CD8-positive, alpha-beta memory T cell (primary cell): ENCODE measurements at regions of chr3 and their contacts with region 1.

Region 1: DNA sequence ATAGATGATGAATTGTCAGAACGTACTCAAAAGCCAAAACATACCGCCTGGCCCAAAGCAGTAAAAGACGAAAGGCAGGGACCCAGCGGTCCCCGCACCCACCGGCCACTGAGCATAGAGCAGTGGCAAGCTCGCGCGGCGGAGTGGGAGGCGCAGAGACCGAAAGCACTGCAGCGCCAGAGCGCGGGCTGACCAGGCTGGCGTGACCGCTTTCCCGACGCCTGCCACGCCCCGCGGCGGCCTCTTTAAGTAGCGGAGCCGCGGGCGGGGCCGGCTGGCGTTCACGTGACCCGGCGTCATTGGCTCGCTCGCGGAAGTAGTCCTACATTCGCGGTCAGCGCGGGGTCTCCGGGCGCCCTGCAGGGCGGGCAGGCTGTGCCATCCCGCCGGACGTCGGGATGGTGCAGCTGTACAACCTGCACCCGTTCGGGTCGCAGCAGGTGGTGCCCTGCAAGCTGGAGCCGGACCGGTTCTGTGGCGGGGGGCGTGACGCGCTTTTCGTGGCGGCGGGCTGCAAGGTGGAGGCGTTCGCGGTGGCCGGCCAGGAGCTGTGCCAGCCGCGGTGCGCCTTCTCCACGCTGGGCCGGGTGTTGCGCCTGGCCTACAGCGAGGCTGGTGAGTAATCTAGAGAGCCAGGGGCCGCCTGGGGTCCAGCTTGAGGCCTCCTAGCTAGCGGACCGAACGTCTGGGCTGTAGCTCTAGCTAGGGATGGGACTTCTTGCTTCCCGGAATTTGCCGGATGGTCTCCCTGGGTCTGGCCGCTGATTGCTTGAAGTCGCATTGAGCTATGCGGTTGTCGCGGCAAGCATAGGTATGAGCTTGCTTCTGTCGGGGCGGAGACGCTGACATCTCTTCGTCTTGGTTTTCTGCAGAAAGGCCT is at the start of gene HPS3:
- DNase-seq: peak; percentile 79 to 88 (median 81)
- H3K4me3 ChIP-seq: peak within 1 kb of the TSS; percentile 85
- H3K4me3 Mint-ChIP-seq: peak within 1 kb of the TSS; percentile 92 to 99 (median 96)
- H3K27ac ChIP-seq: peak within 1 kb of the TSS; percentile 86
- H3K27ac Mint-ChIP-seq: peak within 1 kb of the TSS; percentile 87 to 97 (median 93)
- H3K4me1 ChIP-seq: peaks cover 37% of the 10 kb centered on the region
- H3K4me1 Mint-ChIP-seq: peaks cover 46 to 54% (median 53%) of the 10 kb centered on the region in 3 donors
- H3K27me3 ChIP-seq: no peaks in the 10 kb centered on the region
- H3K27me3 Mint-ChIP-seq: peaks cover 0 to 7% of the 10 kb centered on the region in 2 donors
- total RNA-seq, gene HPS3: 19.3 to 19.6 TPM

Region 2: DNA sequence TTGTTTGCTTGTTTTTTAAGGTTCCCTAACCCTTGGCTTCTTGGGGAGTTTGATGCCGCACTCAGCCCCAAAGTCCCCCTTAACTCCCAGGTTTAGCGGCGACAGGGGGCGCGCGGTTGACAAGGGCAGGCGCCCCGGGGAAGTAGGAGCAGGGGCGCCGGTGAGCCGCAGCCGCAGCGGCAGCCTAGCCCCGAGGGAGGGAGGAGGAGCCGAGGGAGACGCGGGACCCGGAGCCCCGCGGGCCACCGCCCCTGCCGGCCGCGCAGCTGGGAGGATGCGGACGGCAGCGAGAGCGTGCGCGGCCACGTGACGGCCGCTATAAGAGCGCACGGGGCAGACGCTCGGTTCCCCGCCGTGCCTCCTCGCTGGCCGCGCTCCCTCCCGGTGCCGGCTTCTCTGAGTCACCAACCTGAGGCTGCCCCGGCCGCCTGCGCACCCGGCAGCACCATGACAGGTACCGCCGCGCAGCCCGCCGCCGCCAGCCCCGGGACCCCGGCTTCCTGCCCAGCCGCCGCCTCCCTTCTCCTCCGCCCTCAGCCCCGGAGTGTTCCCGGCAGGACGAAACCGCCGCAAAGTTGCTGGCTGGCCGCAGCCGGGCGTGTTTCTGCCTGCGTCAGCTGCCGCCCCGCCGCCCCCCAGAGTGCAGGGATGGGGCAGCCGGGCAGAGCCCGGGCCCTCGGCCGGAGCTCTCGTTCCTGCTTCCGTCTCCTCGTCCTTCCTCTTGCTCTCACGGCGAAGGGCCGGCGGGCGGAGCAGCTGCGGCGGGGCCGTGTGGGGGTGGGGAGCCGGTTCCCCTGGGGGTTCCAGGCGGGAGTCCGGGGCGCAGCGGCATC is 138.2 kb before region 1 on chr3 and contains the start of gene GYG1:
- CTCF ChIA-PET with region 1: interaction called, 10 read pairs
- POLR2A ChIA-PET with region 1: interaction called, 10 read pairs
- DNase-seq: peak; percentile 73 to 88 (median 78)
- H3K4me3 ChIP-seq: peak within 1 kb of the TSS; percentile 53
- H3K4me3 Mint-ChIP-seq: peak within 1 kb of the TSS; percentile 82 to 90 (median 86)
- H3K27ac ChIP-seq: peak within 1 kb of the TSS; percentile 68
- H3K27ac Mint-ChIP-seq: peak within 1 kb of the TSS; percentile 87 to 97 (median 93)
- H3K4me1 ChIP-seq: peaks cover 26% of the 10 kb centered on the region
- H3K4me1 Mint-ChIP-seq: peaks cover 43 to 52% (median 48%) of the 10 kb centered on the region in 3 donors
- H3K27me3 ChIP-seq: no peaks in the 10 kb centered on the region
- H3K27me3 Mint-ChIP-seq: no peaks in the 10 kb centered on the region
- total RNA-seq, gene GYG1: 31.9 to 35.0 TPM

Region 3: DNA sequence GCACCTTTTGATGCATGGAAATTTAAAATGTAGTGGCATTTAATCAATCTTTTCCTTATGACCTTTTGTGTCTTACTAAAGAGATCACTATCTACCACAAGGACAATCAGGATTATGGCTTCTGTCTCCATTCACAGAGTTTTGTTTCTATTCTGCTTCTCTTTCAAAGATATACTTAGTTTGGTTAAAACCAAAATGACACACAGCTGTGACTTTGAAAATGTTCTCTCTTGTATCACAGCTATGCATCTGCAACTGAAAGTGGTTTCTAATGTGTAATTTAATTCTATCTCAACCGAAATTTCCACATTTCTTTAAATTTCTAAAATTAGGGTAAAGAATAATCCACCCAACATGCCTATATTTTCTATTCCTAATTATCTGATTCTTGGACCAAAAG is 71.0 kb before region 1 on chr3:
- CTCF ChIA-PET with region 1: no interaction called
- POLR2A ChIA-PET with region 1: interaction called, 11 read pairs
- DNase-seq: no peak
- H3K4me3 ChIP-seq: no peak overlapping the region
- H3K4me3 Mint-ChIP-seq: no peak overlapping the region
- H3K27ac ChIP-seq: no peak overlapping the region
- H3K27ac Mint-ChIP-seq: peak overlapping the region in 1 of 8 donors; percentile 29
- H3K4me1 ChIP-seq: no peaks in the 10 kb centered on the region
- H3K4me1 Mint-ChIP-seq: no peaks in the 10 kb centered on the region
- H3K27me3 ChIP-seq: no peaks in the 10 kb centered on the region
- H3K27me3 Mint-ChIP-seq: no peaks in the 10 kb centered on the region

Region 4: GRCh38 chr3:149215515-149215914 is 85.9 kb after region 1 on chr3:
- CTCF ChIA-PET with region 1: no interaction called
- POLR2A ChIA-PET with region 1: no interaction called
- DNase-seq: no peak
- H3K4me3 ChIP-seq: no peak overlapping the region
- H3K4me3 Mint-ChIP-seq: no peak overlapping the region
- H3K27ac ChIP-seq: no peak overlapping the region
- H3K27ac Mint-ChIP-seq: no peak overlapping the region
- H3K4me1 ChIP-seq: no peaks in the 10 kb centered on the region
- H3K4me1 Mint-ChIP-seq: no peaks in the 10 kb centered on the region
- H3K27me3 ChIP-seq: no peaks in the 10 kb centered on the region
- H3K27me3 Mint-ChIP-seq: peaks cover 1 to 4% of the 10 kb centered on the region in 2 donors

Region 5: DNA sequence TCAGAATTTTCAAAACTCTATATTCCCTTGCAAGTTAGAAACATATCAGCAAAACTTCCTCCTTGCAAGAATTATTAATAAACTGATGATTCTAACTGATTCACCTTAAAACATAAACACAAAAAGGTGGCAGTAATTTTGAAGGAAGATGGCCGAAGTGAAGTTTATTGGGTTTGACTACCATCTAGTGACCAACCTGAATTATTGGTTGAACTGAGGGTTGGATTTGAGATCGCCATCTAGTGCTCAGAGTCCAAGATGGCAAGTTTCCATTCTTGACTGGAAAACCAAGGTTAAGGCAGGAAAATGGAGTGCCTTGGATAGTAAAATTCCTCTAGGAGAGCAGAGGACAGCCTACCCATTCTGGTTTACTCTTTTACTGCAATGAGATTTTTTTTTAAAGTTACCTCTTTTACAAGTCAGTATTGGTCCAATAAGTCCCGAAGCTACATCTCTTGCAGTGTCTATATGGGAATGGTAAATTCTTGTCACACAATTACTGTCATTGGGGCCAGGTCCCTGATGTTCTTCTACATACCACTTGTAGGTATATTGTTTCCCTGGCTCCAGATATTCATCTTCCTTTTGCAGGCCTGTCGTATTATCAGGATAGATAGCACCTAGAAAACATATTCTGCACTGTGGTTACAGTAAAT is 143.7 kb after region 1 on chr3:
- CTCF ChIA-PET with region 1: interaction called, 10 read pairs
- POLR2A ChIA-PET with region 1: interaction called, 5 read pairs
- DNase-seq: peak in 3 of 5 donors; percentile 13 to 60 (median 53)
- H3K4me3 ChIP-seq: no peak overlapping the region
- H3K4me3 Mint-ChIP-seq: no peak overlapping the region
- H3K27ac ChIP-seq: no peak overlapping the region
- H3K27ac Mint-ChIP-seq: peak overlapping the region in 1 of 8 donors; percentile 86
- H3K4me1 ChIP-seq: peaks cover 15% of the 10 kb centered on the region
- H3K4me1 Mint-ChIP-seq: peaks cover 15 to 23% (median 16%) of the 10 kb centered on the region in 3 donors
- H3K27me3 ChIP-seq: no peaks in the 10 kb centered on the region
- H3K27me3 Mint-ChIP-seq: no peaks in the 10 kb centered on the region